HepG2 (cell line): ENCODE measurements at regions of chr14 and their contacts with region 1.

Region 1: DNA sequence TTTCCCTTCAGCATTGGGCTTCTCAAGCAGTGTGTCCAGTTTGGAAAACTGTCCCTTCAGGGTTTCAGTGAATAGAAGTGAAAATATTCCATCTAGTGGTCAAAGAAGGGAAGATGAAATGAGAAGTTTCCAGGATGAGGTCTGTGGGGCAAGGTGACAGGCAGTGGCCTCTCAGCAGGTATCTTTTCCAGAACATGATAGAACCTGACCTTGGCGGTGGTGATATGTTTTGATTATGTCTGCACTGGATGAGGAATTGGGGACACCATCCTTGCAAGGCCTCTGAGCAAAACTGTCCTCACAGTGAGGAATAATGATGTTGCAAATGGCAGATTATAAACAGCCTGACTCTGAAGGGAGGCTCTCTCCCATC is 4.7 kb downstream of the GPX2 start:
- DNase-seq: peak; percentile 63
- ATAC-seq: peak; percentile 18
- H3K4me3 ChIP-seq: no peak overlapping the region
- H3K27ac ChIP-seq: peak overlapping the region; percentile 0
- H3K4me1 ChIP-seq: peaks cover 63% of the 10 kb centered on the region
- H3K27me3 ChIP-seq: no peaks in the 10 kb centered on the region; a peak in 1 of 5 replicates
- CTCF ChIP-seq: peak; percentile 73
- EP300 ChIP-seq: no peak
- POLR2A ChIP-seq: 0 out of 4 replicates have a peak, but pooled peaks of 1 of the 2 experiments have one; percentile 34
- RAD21 ChIP-seq: peak; percentile 34; the same call in 1 of the 2 replicates

Region 2: DNA sequence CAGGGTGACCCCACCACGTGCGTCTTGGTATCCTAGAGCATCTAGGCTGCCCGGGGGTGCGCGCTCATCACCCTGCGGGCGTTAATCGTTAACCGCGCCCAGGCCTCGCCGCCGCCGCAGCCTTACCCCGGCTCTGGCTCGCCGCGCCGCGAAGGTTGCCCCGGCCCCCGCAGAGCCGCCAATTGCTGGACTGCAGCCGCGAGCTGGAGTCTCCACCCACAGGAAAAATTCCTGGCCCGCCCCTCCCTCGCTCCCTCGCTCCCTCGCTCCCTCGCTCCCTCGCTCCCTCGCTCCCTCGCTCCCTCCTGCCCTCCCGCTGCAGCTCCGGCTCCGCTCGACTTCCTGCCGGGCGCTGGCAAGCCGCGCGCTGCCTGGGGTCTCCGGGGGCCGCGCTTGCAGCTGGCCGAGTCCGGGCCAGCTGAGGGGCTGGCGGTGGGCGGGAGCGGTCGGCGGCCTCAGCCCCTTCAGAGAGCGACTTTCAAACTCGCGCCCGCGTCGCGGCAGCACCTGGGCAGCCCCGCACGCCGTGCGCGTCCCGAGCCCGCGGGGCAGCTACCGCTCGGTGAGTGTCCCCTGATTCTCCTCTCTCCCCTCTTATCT is 233.6 kb before region 1 on chr14 and contains the start of gene PLEKHG3:
- CTCF ChIA-PET with region 1: no interaction called
- POLR2A ChIA-PET with region 1: interaction called, 3 read pairs
- in situ Hi-C with region 1: no loop called
- intact Hi-C with region 1: loop called (anchors 10 kb)
- DNase-seq: peak; percentile 59
- ATAC-seq: peak; percentile 77
- H3K4me3 ChIP-seq: peak within 1 kb of the TSS; percentile 63 to 79 (median 73)
- H3K27ac ChIP-seq: no peak within 1 kb of the TSS
- H3K4me1 ChIP-seq: peaks cover 58% of the 10 kb centered on the region
- H3K27me3 ChIP-seq: peaks cover 0 to 24% of the 10 kb centered on the region in 2 experiments; a peak in 4 of 5 replicates
- CTCF ChIP-seq: no peak
- EP300 ChIP-seq: no peak
- POLR2A ChIP-seq: no peak; a peak in 1 of 4 replicates
- RAD21 ChIP-seq: no peak
- total RNA-seq, gene PLEKHG3: 9.5 and 9.8 TPM in 2 replicates

Region 3: GRCh38 chr14:64914237-64914971 is 23.4 kb before region 1 on chr14 and contains the start of gene CHURC1:
- CTCF ChIA-PET with region 1: no interaction called
- POLR2A ChIA-PET with region 1: interaction called, 13 read pairs
- in situ Hi-C with region 1: no loop called
- intact Hi-C with region 1: loop called (anchors 1 kb)
- DNase-seq: peak; percentile 95
- ATAC-seq: peak; percentile 98
- H3K4me3 ChIP-seq: peak within 1 kb of the TSS; percentile 86 to 97 (median 90)
- H3K27ac ChIP-seq: peak within 1 kb of the TSS; percentile 78
- H3K4me1 ChIP-seq: peaks cover 34% of the 10 kb centered on the region
- H3K27me3 ChIP-seq: no peaks in the 10 kb centered on the region; a peak in 1 of 5 replicates
- CTCF ChIP-seq: 0 out of 2 replicates have a peak, but pooled peaks have one; percentile 4
- EP300 ChIP-seq: no peak
- POLR2A ChIP-seq: peak; percentile 93 to 95
- RAD21 ChIP-seq: peak; percentile 36; the same call in 1 of the 2 replicates
- total RNA-seq, gene CHURC1: 72.1 and 74.4 TPM in 2 replicates

Region 4: DNA sequence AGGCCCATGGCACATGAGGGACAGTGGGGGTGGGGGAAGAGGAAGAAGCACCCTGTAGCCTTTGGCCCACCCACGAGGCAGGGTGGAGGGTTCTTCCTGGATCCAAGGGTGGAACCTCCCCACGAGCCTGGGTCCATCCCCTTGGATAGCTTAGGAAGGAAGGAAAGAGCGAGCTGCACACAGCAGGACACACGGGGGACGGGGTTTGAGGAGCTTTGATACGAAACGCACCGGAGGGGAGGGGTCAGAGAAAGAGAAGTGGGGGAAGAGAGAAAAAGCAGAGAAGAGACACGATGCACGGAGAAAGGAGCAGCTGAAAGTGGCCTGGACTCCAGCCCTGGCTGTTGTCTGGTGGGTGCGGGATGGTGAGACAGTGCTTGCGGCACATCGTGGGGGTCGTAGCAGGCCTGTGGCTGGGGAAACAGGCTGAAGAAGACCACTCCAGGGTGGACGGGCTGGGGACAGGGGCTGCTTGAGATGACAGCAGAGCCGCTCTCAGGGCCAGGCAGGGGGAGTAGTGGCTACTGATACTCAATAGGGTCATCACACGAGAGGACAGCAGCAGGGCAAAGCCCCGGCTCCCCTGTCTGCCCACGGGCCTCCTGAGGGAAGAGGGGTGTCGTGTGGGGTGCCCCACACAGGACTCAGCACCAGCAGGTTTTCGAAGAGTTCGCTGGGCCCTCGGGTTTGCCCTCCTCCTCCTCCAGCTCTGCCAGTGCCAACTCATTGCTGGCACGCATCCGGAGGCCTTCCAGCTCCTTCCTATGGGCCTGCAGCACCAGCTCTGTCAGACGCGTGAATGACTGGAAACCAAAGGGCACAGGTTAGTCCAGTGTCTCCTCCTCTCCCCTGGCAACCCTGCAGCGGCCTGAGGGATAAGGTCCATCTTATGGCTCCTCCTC is 10.2 kb after region 1 on chr14:
- CTCF ChIA-PET with region 1: no interaction called
- POLR2A ChIA-PET with region 1: interaction called, 31 read pairs
- in situ Hi-C with region 1: no loop called
- intact Hi-C with region 1: no loop called
- DNase-seq: peak; percentile 85
- ATAC-seq: peak; percentile 97
- H3K4me3 ChIP-seq: peak overlapping the region in 1 of 3 experiments; percentile 54; a peak in 2 of 6 replicates
- H3K27ac ChIP-seq: peak overlapping the region; percentile 79
- H3K4me1 ChIP-seq: peaks cover 64% of the 10 kb centered on the region
- H3K27me3 ChIP-seq: no peaks in the 10 kb centered on the region
- CTCF ChIP-seq: no peak
- EP300 ChIP-seq: peak in 1 of 2 experiments; percentile 35; a peak in 1 of 4 replicates
- POLR2A ChIP-seq: peak; percentile 60 to 74
- RAD21 ChIP-seq: 0 out of 2 replicates have a peak, but pooled peaks have one; percentile 26

Region 5: DNA sequence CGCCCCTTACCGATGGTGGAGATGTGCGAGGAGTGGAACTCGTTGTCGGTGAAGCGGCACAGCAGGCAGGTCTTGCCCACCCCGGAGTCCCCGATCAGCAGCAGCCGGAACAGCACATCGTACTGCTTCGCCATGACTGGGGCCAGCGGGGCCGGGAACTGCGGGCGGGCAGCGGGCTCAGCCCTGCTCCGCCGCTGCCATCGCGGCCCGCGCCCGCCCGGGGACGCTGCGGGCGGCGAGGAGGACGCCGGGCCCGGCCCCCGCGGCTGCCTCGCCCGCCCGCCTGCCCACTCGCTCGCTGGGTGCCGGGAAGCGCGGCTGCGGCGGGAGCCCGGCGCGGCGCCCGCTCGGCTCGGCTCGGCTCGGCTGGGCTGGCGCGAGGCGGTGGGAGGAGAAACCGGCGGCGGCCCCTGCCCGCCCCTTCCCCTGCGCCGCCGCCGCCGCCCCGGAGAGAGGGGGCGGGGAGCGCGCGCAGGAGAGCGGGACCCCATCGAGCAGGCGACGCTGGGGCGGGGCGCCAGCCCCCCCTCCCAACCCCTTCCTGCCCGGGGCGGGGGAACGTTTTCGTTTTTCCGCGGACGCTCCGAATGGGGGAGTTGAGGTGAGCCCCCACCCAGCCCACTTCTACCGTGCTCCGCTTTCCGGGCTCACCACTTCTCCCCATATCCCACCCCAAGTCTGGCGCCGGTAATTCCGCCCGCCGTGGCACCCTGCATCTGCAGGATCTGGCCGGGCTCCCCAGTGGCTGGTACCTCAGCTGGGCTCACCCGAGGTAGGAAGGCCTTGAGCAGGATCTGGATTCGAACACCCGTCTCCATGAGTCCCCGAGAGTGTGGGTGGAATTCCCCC is 34.4 kb after region 1 on chr14 and contains the start of gene RAB15:
- CTCF ChIA-PET with region 1: no interaction called
- POLR2A ChIA-PET with region 1: interaction called, 11 read pairs
- in situ Hi-C with region 1: no loop called
- intact Hi-C with region 1: no loop called
- DNase-seq: no peak
- ATAC-seq: peak; percentile 66
- H3K4me3 ChIP-seq: peak within 1 kb of the TSS; percentile 74 to 81 (median 79)
- H3K27ac ChIP-seq: no peak within 1 kb of the TSS
- H3K4me1 ChIP-seq: peaks cover 38% of the 10 kb centered on the region
- H3K27me3 ChIP-seq: no peaks in the 10 kb centered on the region; a peak in 1 of 5 replicates
- CTCF ChIP-seq: no peak
- EP300 ChIP-seq: no peak
- POLR2A ChIP-seq: no peak
- RAD21 ChIP-seq: no peak
- total RNA-seq, gene RAB15: 17.2 and 18.5 TPM in 2 replicates

Region 6: GRCh38 chr14:65156568-65157366 is 219.0 kb after region 1 on chr14:
- CTCF ChIA-PET with region 1: no interaction called
- POLR2A ChIA-PET with region 1: no interaction called
- in situ Hi-C with region 1: no loop called
- intact Hi-C with region 1: no loop called
- DNase-seq: no peak
- ATAC-seq: peak; percentile 31; the same call in 2 of the 3 replicates
- H3K4me3 ChIP-seq: peak overlapping the region in 1 of 3 experiments; percentile 33; a peak in 1 of 6 replicates
- H3K27ac ChIP-seq: no peak overlapping the region
- H3K4me1 ChIP-seq: no peaks in the 10 kb centered on the region
- H3K27me3 ChIP-seq: peaks cover 0 to 9% of the 10 kb centered on the region in 2 experiments; a peak in 2 of 5 replicates
- CTCF ChIP-seq: no peak
- EP300 ChIP-seq: no peak
- POLR2A ChIP-seq: no peak
- RAD21 ChIP-seq: no peak